Panc1 (cell line): ENCODE measurements at regions of chr15 and their contacts with region 1.

Region 1: GRCh38 chr15:73283366-73283962 is 85.3 kb downstream of the HCN4 start:
- DNase-seq: no peak
- ATAC-seq: no peak
- H3K4me3 ChIP-seq: no peak overlapping the region
- H3K27ac ChIP-seq: no peak overlapping the region
- H3K4me1 ChIP-seq: no peaks in the 10 kb centered on the region
- H3K27me3 ChIP-seq: no peaks in the 10 kb centered on the region; the same call in 1 of the 2 replicates
- CTCF ChIP-seq: no peak

Region 2: DNA sequence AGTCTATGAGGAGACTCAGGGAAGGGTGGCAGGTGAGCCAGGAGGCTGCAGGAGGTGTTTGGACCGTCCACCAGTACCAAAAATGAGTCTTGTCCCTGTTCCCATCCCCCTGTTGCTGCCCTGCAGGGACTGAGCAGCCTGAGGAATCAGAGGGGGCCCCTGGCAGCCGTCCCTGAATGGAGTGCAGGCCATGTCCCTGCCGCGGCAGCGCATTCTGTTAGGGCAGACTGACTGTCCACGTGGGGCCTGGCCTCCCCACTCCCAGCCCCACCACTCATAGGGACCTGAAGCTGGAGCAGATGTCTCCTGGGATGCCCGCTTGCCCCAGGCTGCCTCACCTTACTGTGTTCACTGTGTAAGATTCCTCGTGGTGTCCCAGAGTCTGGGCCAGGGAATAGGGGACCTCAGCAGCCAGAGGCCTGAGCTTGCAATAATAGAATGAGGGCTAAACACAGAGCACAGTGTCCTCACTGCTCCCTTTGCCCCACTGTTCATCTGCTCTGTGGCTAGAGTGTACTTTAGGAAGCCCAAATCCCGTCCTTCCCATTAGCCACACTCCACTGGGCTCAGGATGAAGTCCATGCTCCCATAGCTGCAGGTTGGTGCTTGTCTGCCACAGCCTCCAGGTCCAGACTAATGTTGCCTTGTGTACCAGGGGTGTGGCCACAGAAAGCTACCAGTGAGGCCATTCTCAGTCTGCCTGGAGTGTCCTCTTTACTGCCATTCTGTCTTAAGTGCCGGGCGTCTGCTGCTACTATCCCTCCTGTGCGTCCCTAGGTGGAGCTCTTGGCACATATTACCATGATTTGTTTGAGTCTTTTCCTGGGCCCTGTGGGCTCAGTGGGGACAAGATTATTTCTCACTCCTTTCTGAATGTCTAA is 22.1 kb after region 1 on chr15:
- CTCF ChIA-PET with region 1: no interaction called
- POLR2A ChIA-PET with region 1: no interaction called
- in situ Hi-C with region 1: no loop called
- intact Hi-C with region 1: no loop called
- DNase-seq: peak; percentile 41
- ATAC-seq: peak; percentile 94
- H3K4me3 ChIP-seq: no peak overlapping the region
- H3K27ac ChIP-seq: no peak overlapping the region
- H3K4me1 ChIP-seq: no peaks in the 10 kb centered on the region
- H3K27me3 ChIP-seq: no peaks in the 10 kb centered on the region
- CTCF ChIP-seq: peak; percentile 85

Region 3: GRCh38 chr15:73464602-73465001 is 181.1 kb after region 1 on chr15:
- CTCF ChIA-PET with region 1: interaction called, 16 read pairs
- POLR2A ChIA-PET with region 1: no interaction called
- in situ Hi-C with region 1: no loop called
- intact Hi-C with region 1: no loop called
- DNase-seq: peak; percentile 2
- ATAC-seq: no peak
- H3K4me3 ChIP-seq: no peak overlapping the region
- H3K27ac ChIP-seq: no peak overlapping the region
- H3K4me1 ChIP-seq: no peaks in the 10 kb centered on the region
- H3K27me3 ChIP-seq: peaks cover 3% of the 10 kb centered on the region; the same call in 1 of the 2 replicates
- CTCF ChIP-seq: peak; percentile 27